CD8-positive, alpha-beta T cell (primary cell): ENCODE measurements at regions of chr6 and their contacts with region 1.

Region 1: GRCh38 chr6:37222125-37222967 is 35.2 kb upstream of the TBC1D22B start:
- DNase-seq: peak; percentile 27 to 81 (median 67)
- ATAC-seq: peak; percentile 93
- H3K4me3 ChIP-seq: peak overlapping the region; percentile 71 to 75
- H3K4me3 Mint-ChIP-seq: peak overlapping the region; percentile 85
- H3K27ac ChIP-seq: no peak overlapping the region
- H3K27ac Mint-ChIP-seq: peak overlapping the region; percentile 60
- H3K4me1 ChIP-seq: peaks cover 9% of the 10 kb centered on the region
- H3K4me1 Mint-ChIP-seq: peaks cover 12% of the 10 kb centered on the region
- H3K27me3 ChIP-seq: no peaks in the 10 kb centered on the region
- H3K27me3 Mint-ChIP-seq: no peaks in the 10 kb centered on the region
- CTCF ChIP-seq: no peak

Region 2: DNA sequence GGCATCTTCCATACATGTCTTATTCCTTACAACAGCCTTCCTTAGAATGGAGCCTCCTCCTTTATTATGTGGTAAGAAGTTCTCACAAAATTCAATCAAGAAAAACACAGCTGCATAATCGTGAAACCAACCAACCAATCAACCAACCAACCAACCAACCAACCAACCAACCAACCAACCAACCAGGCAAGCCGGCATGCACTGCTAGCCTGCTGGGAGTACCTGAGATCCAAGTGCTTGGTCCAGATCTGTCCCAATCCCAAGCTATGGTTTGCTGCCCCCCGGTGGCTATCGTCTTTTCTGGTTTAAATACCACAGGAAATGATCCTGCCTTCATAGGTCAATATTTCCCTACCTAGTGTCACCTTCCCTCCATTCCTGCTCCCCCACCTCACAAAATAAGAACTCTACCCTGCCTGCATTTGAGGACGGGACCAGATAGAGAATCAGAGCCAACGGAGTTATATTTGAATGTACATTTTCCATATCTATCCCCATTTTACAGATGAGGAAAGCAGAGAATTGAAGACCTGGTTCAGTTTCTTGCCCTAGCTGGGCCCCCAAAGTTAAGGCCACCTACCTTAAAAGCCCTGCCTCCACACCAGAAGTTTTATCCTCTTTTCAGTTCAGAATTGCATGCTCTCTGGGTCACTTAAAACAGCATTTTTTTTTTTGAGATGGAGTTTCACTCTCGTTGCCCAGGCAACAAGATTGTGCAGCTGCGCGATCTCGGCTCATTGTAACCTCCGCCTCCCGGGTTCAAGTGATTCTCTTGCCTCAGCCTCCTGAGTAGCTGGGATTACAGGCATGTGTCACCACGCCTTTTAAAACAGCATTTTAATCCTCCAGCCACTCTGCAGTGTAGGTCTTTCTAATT is 497.6 kb before region 1 on chr6:
- CTCF ChIA-PET with region 1: no interaction called
- POLR2A ChIA-PET with region 1: no interaction called
- intact Hi-C with region 1: no loop called
- DNase-seq: peak in 5 of 9 experiments; percentile 23 to 49 (median 37)
- ATAC-seq: no peak
- H3K4me3 ChIP-seq: no peak overlapping the region
- H3K4me3 Mint-ChIP-seq: no peak overlapping the region
- H3K27ac ChIP-seq: no peak overlapping the region
- H3K27ac Mint-ChIP-seq: no peak overlapping the region
- H3K4me1 ChIP-seq: no peaks in the 10 kb centered on the region
- H3K4me1 Mint-ChIP-seq: peaks cover 5% of the 10 kb centered on the region
- H3K27me3 ChIP-seq: no peaks in the 10 kb centered on the region
- H3K27me3 Mint-ChIP-seq: no peaks in the 10 kb centered on the region
- CTCF ChIP-seq: no peak

Region 3: GRCh38 chr6:37257634-37258404 is 35.5 kb after region 1 on chr6 and contains the starts of genes TBC1D22B and TMEM217:
- CTCF ChIA-PET with region 1: no interaction called
- POLR2A ChIA-PET with region 1: no interaction called
- intact Hi-C with region 1: loop called (anchors 1 to 2 kb)
- DNase-seq: peak; percentile 89 to 97 (median 95)
- ATAC-seq: peak; percentile 99
- H3K4me3 ChIP-seq: peak within 1 kb of the TSS; percentile 93 to 100
- H3K4me3 Mint-ChIP-seq: peak within 1 kb of the TSS; percentile 92
- H3K27ac ChIP-seq: peak within 1 kb of the TSS; percentile 74 to 94
- H3K27ac Mint-ChIP-seq: peak within 1 kb of the TSS; percentile 85
- H3K4me1 ChIP-seq: peaks cover 24% of the 10 kb centered on the region
- H3K4me1 Mint-ChIP-seq: peaks cover 40% of the 10 kb centered on the region
- H3K27me3 ChIP-seq: no peaks in the 10 kb centered on the region
- H3K27me3 Mint-ChIP-seq: no peaks in the 10 kb centered on the region
- CTCF ChIP-seq: no peak
- total RNA-seq, gene TBC1D22B: 6.7 to 6.8 TPM
- total RNA-seq, gene TMEM217: 0.27 to 1.2 TPM

Region 4: GRCh38 chr6:37303932-37304363 is 81.6 kb after region 1 on chr6:
- CTCF ChIA-PET with region 1: no interaction called
- POLR2A ChIA-PET with region 1: no interaction called
- intact Hi-C with region 1: no loop called
- DNase-seq: no peak
- ATAC-seq: no peak
- H3K4me3 ChIP-seq: no peak overlapping the region
- H3K4me3 Mint-ChIP-seq: no peak overlapping the region
- H3K27ac ChIP-seq: no peak overlapping the region
- H3K27ac Mint-ChIP-seq: no peak overlapping the region
- H3K4me1 ChIP-seq: no peaks in the 10 kb centered on the region
- H3K4me1 Mint-ChIP-seq: no peaks in the 10 kb centered on the region
- H3K27me3 ChIP-seq: no peaks in the 10 kb centered on the region
- H3K27me3 Mint-ChIP-seq: no peaks in the 10 kb centered on the region
- CTCF ChIP-seq: no peak